ENCODE measurements at regions of chr2 and their contacts with region 1.

Region 1: GRCh38 chr2:18369760-18370159 is 190.7 kb downstream of the RDH14 start:
- DNase-seq: no peak
- H3K4me3 ChIP-seq: no peak overlapping the region
- CTCF ChIP-seq: no peak

Region 2: DNA sequence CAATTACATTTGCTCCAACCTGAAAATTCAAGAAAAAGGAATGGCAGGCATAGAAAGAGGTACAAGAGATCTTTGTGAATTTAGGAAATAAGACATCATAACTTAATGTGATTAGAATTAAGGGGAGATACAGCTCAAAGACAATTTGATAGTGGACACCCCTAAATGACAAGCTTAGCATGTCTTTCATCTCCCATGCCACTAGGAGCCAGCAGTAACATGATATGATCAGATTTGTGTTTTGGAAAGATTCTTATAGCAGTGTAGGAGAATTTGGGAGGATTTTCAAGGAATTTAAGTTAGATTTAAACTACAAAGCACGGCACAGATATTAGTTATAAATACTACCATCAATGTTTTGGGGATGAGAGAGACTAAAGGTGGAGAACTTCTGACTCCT is 150.1 kb before region 1 on chr2:
- CTCF ChIA-PET with region 1: interaction called, 14 read pairs
- POLR2A ChIA-PET with region 1: no interaction called
- DNase-seq: no peak
- H3K4me3 ChIP-seq: no peak overlapping the region
- CTCF ChIP-seq: peak; percentile 33

Measured in AG04449 (cell line).